Breast epithelium (tissue), 4 donors: ENCODE measurements at regions of chr20 and their contacts with region 1.

Region 1: DNA sequence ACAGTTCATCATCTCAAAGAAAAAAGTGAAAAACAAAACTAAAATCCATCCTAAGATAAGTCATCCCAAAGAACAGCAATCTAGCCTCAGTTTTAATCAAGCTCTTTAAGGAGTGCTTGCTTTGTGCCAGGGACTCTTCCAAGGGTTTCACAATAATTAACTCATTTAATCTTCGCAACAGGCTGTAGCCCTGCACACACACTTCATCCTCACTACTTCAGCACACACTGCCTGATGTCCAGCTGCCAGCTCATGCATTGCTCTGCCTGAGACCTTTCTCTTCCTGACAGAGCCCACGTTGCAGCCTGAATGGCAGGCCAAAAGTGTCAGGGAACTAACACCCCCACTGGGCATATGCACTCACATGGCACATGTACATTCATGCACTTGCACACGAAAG is 21.2 kb upstream of the PTPRT start:
- DNase-seq: no peak
- H3K4me3 ChIP-seq: no peak overlapping the region
- H3K27ac ChIP-seq: no peak overlapping the region
- H3K4me1 ChIP-seq: no peaks in the 10 kb centered on the region
- H3K27me3 ChIP-seq: no peaks in the 10 kb centered on the region
- CTCF ChIP-seq: no peak
- POLR2A ChIP-seq: no peak

Region 2: GRCh38 chr20:43178080-43178479 is 32.8 kb before region 1 on chr20:
- intact Hi-C with region 1: no loop called
- DNase-seq: no peak
- H3K4me3 ChIP-seq: no peak overlapping the region
- H3K27ac ChIP-seq: no peak overlapping the region
- H3K4me1 ChIP-seq: no peaks in the 10 kb centered on the region
- H3K27me3 ChIP-seq: no peaks in the 10 kb centered on the region
- CTCF ChIP-seq: no peak
- POLR2A ChIP-seq: no peak

Region 3: DNA sequence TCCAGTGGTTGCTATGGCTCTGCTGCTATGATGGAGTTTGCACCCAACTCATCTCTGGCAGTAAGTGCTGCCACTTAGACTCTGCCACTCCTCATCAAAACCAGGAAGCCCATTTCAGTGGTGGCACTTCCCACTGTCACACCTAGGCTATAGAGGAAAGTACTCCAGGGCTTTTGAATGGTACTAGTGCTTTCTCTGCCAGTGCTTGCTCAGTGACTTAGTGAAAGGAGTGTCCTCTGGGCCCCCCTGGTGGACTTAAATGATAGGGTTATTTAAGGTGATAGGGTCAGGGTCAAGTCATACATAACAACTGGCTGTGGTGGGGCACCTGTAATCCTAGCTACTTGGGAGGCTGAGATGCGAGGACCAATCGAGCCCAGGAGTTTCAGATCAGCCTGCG is 1077.4 kb after region 1 on chr20:
- intact Hi-C with region 1: loop called (anchors 10 kb)
- DNase-seq: no peak
- H3K4me3 ChIP-seq: no peak overlapping the region
- H3K27ac ChIP-seq: no peak overlapping the region
- H3K4me1 ChIP-seq: no peaks in the 10 kb centered on the region
- H3K27me3 ChIP-seq: no peaks in the 10 kb centered on the region
- CTCF ChIP-seq: no peak
- POLR2A ChIP-seq: no peak